Left ventricle myocardium superior (tissue), 1 donor: ENCODE measurements at regions of chr4 and their contacts with region 1.

Region 1: GRCh38 chr4:84582302-84583000 is 476 bp upstream of the CDS1 start:
- DNase-seq: peak; percentile 92
- ATAC-seq: peak; percentile 96

Region 2: DNA sequence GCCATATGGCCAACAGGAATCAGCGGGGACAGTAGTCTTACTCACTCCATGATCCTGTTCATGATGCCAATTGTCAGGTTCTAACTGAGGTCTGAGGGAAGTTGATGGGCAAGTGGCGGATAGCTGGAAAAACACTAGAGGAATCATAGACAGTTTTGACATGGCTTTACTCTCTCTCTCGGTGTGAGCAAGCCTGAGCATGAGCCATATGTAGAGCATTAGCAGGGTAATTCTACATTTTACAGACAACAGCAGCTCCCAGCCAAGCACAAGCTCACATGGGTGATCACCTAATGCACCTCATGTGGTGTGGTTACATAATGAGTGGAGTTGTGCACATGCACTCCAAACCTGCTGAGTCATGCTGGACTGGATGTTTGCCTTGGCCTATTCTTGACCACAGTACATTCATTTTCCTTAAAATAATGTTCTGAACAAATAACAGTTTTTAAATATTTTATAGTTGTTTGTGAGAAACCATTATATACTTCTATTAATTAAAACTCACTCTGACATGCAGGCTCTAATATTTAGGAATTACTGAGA is 617.4 kb before region 1 on chr4:
- intact Hi-C with region 1: no loop called
- DNase-seq: no peak
- ATAC-seq: no peak

Region 3: DNA sequence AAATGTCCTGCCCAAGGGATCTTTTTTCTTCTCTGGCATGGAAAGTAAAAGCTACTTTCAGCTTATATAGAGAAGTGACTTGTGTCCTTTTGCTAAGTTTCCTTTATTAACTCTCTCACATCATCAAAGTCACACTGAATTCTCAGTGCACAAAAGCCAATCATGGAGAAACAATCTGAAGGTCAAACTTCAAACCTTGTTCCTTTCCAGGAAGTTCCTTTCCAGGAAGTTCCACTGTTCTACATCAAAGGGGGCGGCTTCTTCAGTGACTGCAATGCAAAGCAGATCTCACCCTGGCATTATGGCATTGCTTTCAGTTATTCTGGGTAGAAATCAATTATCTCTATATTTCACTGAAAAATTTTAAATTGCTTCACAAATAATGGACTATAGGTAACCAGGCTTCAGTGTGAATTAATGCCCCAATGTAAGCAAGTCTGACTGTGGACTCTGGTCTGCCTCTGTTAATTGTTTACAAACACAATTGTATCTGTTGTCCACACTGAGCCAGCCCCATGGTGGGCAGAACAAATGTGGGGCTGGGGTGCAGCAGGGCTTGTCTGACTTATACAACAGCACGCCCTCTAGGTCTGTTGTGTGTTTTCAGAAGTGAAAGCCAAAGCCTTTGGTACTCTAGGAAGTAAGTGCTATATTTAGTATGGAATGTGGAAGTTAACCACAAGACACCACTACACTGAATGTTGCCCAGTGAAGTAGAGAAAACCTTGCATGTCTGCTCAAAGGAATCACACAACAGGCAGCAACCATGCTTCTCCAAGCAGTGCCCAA is 99.2 kb after region 1 on chr4:
- intact Hi-C with region 1: loop called (anchors 10 kb)
- DNase-seq: no peak
- ATAC-seq: peak; percentile 91

Region 4: GRCh38 chr4:85228264-85228663 is 645.8 kb after region 1 on chr4:
- intact Hi-C with region 1: no loop called
- DNase-seq: no peak
- ATAC-seq: no peak